Stomach (tissue), 19 donors: ENCODE measurements at regions of chr20 and their contacts with region 1.

Region 1: GRCh38 chr20:4592316-4593148 is 129.2 kb upstream of the PRND start:
- DNase-seq: peak; percentile 67 to 86
- H3K4me3 ChIP-seq: peak overlapping the region; percentile 36 to 46 (median 45)
- H3K27ac ChIP-seq: peak overlapping the region in 4 of 5 donors; percentile 12 to 70 (median 44)
- H3K4me1 ChIP-seq: peaks cover 12 to 20% (median 16%) of the 10 kb centered on the region in 4 donors
- H3K27me3 ChIP-seq: no peaks in the 10 kb centered on the region
- CTCF ChIP-seq: peak in 5 of 7 experiments; percentile 49 to 95 (median 94)
- EP300 ChIP-seq: no peak
- POLR2A ChIP-seq: no peak

Region 2: GRCh38 chr20:4112481-4113421 is 479.8 kb before region 1 on chr20:
- intact Hi-C with region 1: loop called (anchors 10 kb)
- DNase-seq: peak; percentile 54 to 86
- H3K4me3 ChIP-seq: no peak overlapping the region
- H3K27ac ChIP-seq: peak overlapping the region in 1 of 5 donors; percentile 62
- H3K4me1 ChIP-seq: peaks cover 5 to 23% (median 16%) of the 10 kb centered on the region in 4 donors
- H3K27me3 ChIP-seq: peaks cover 0 to 16% (median 0%) of the 10 kb centered on the region in 3 donors
- CTCF ChIP-seq: no peak
- EP300 ChIP-seq: no peak
- POLR2A ChIP-seq: no peak

Region 3: DNA sequence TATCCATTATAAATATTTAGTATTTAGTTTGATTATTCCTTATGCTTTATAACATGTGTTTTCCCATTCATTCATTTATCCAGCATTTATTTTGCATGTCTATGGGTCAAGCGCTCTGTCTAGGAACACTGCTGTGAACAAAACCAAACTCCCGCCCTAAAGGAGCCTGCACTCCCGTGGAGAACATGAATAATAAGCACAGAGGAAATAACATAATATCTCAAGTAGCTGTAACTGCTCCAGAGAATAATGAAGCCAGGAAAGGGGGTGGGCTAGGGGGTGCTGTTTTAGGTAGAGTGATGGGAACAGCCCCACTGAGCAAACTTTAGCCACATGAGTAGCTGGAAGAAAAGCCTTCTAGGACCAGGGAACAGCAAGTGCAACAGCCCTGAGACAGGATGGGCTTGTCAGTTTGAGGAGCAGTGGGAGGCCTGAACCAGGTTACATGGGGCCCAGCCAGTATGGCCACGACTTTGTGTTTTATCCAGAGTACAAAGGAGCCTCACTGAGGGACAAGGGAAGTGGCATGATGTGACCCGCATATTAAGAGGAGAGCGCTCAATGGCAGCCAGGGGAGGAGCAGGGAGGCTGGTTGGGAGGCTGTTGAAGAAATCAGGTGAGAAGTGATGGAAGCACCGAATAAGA is 104.8 kb after region 1 on chr20:
- intact Hi-C with region 1: no loop called
- DNase-seq: no peak
- H3K4me3 ChIP-seq: no peak overlapping the region
- H3K27ac ChIP-seq: no peak overlapping the region
- H3K4me1 ChIP-seq: peaks cover 0 to 18% (median 0%) of the 10 kb centered on the region in 4 donors
- H3K27me3 ChIP-seq: no peaks in the 10 kb centered on the region
- CTCF ChIP-seq: no peak
- EP300 ChIP-seq: no peak
- POLR2A ChIP-seq: no peak